ENCODE measurements at regions of chr4 and their contacts with region 1.

Region 1: DNA sequence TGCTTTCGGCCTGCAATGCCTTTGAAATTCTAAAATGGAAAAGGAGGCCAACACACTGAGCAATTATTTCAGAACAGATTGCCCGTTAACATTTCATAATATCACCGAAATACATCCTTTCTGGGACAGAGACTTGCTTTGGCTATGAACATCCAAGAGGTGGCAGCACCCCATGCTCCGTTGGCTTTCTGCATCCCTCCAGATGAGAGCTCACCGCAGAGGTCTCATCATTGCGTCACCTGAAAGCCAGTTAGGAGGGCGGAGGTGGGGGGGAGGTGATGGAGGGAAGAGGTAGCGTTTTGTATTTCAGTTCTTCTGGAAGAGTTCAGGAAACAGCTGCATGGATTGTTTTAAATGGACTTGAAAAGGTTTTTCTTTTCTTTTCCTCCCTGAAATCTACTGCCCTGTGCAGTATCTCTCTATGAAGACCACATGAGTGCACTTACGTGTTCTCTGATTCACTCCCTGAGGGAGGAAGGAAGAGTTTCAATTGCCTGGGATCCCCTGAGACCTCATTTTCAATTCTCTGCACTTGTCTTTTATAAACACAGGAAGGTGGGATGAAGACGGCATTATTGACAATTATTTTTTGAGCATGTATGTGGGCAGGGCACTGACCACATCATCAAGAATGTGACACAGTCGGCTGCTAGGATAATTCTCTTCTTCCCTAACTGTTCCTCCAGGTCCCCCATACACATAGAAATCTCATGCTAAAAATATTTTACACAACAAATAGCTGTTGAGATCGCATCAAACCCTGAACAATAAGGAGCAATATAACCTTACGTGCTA is 166.9 kb upstream of the PGRMC2 start:
- DNase-seq: peak; percentile 59 to 89
- H3K4me3 ChIP-seq: no peak overlapping the region
- H3K27ac ChIP-seq: no peak overlapping the region
- H3K4me1 ChIP-seq: peaks cover 0 to 10% of the 10 kb centered on the region in 2 donors
- H3K27me3 ChIP-seq: no peaks in the 10 kb centered on the region
- CTCF ChIP-seq: peak; percentile 68 to 85 (median 80)

Region 2: DNA sequence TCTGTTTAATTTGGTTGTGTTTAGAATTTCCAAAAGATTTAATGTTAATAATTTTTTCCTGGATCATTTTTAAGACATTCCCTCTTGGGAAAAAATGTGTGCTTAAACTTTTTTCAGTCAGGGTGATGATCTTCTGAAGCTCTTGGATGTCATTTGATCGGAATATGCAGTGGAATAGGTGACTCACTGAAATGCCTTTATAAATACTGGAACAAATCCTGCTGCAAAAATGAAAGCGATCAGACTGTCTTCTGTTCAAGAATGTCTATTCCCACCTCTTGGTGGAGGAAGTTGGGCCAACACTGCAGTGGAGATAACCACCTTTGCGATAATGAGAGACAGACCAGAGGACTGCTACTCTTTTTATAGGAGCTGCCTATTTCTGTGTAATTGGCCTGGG is 346.7 kb before region 1 on chr4:
- intact Hi-C with region 1: no loop called
- DNase-seq: no peak
- H3K4me3 ChIP-seq: no peak overlapping the region
- H3K27ac ChIP-seq: no peak overlapping the region
- H3K4me1 ChIP-seq: no peaks in the 10 kb centered on the region
- H3K27me3 ChIP-seq: no peaks in the 10 kb centered on the region
- CTCF ChIP-seq: no peak

Region 3: GRCh38 chr4:128468123-128468989 is 13.9 kb after region 1 on chr4:
- intact Hi-C with region 1: loop called (anchors 2 kb)
- DNase-seq: peak; percentile 33 to 85
- H3K4me3 ChIP-seq: peak overlapping the region; percentile 22 to 40
- H3K27ac ChIP-seq: peak overlapping the region; percentile 64 to 72
- H3K4me1 ChIP-seq: peaks cover 4 to 10% of the 10 kb centered on the region in 2 donors
- H3K27me3 ChIP-seq: no peaks in the 10 kb centered on the region
- CTCF ChIP-seq: no peak

Region 4: DNA sequence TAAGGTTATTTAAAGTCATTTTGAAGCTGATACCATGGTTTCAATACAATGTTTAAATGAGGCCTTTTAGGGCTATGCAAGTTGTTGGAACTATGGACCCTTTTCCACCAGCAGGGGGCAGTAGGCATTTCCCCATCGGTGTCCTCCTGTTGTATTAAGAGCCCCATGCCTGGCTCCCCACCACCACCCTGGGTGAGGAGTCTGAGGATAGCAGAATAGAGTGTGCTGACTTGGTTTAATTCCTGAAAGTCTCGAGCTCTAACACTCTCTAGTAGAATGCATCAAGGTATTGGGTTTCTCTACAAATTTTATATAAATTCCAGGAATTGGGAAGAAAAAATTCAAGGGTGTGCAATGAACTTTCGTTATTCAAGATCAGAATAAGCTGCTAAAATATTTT is 120.2 kb after region 1 on chr4:
- intact Hi-C with region 1: loop called (anchors 2 kb)
- DNase-seq: peak in 1 of 2 donors; percentile 78
- H3K4me3 ChIP-seq: no peak overlapping the region
- H3K27ac ChIP-seq: no peak overlapping the region
- H3K4me1 ChIP-seq: peaks cover 6 to 17% of the 10 kb centered on the region in 2 donors
- H3K27me3 ChIP-seq: no peaks in the 10 kb centered on the region
- CTCF ChIP-seq: peak in 2 of 3 experiments; percentile 39 to 42

Region 5: DNA sequence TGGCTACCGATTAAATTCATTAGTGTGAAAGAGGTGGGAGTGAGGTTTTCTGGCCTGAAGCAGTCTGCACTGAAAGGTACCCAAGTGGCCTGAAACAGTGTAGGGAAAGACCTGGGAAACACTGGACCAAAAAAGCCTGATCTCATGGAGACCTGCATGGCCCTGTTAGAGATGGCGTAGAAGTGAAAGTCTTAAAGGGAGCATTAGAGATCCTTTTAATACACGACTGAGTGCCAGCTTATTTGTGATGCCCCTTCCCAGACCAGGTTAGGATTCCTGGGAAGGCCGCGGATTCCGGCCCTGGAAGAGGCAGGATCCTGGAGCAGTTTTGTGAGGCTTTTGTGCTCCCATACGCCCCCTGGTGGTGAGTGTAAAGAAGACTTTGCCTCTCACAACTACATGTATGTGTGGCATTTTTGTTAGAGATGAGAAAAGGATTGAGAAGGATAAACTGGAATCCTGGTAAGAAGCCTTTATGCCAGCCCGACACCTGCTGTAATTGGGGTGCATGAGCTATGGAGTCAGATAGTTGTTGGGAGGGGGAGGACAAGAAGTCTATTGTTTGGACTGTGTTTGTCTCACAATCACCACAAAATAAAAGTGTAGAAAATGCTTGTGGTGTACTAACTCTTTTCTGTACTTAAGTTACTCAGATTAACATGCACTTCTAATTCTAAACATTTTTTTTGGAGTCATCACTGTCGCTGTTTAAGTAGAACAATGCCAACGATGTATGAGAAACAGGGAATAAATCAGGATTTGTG is 409.0 kb after region 1 on chr4:
- intact Hi-C with region 1: loop called (anchors 1 kb)
- DNase-seq: peak in 1 of 2 donors; percentile 82
- H3K4me3 ChIP-seq: no peak overlapping the region
- H3K27ac ChIP-seq: peak overlapping the region; percentile 29 to 30
- H3K4me1 ChIP-seq: peaks cover 0 to 18% of the 10 kb centered on the region in 2 donors
- H3K27me3 ChIP-seq: no peaks in the 10 kb centered on the region
- CTCF ChIP-seq: peak; percentile 62 to 89 (median 75)

Measured in ascending aorta (tissue), 2 donors.